Sciatic nerve (tissue), 2 donors: ENCODE measurements at regions of chr2 and their contacts with region 1.

Region 1: DNA sequence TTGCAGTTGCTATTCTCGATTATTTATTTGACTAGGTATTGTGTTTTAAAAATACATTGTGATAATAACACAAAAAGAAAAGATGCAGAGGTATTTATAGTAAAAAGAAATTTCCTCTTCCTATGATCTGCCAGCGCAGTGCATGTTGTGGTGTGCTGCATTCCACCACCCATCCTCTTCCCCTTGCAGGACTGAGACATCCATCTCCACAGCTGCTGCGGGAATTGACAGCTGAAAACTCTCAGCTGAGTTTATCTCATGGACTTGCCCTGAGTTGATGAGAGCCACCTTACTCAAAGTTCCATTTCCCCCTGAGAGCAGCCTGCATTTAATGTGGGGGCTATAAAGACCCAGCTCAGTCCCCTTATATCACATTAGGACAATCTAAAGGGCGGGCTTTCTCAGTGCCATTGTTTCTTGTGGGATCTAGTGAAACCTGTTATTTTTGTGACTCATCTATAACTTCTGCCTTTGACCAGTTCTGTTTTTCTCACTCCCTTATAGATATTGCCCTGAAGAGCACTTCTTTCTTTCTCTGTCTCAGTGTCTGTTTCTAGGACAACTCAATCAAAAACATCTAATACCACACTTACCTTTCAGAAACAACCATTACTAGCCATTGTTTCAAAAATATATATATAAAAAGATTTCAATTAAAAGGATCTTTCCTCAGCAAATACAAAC is 698.5 kb downstream of the NR4A2 start:
- DNase-seq: no peak
- ATAC-seq: peak; percentile 60

Region 2: DNA sequence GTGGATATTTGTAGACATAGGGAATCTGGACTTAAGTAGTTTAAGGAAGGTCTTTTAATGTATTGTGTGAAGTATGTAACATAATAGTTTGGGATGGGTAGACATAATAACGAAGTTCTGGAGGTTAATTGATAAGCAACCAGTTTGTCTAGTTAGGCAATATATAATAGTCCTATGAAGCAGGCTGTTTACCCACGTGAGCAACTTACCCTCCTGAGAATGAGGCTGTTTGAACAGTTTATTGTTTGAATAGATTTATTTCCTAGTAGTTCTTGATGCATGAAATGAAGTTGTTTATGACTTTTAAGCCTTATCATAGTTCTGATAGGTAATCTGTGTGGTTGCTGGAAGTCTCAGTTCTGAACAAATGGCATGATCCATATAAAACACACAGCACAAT is 1400.8 kb before region 1 on chr2:
- intact Hi-C with region 1: loop called (anchors 5 kb)
- DNase-seq: no peak
- ATAC-seq: no peak